ENCODE measurements at regions of chr10 and their contacts with region 1.

Region 1: GRCh38 chr10:126013489-126014281 is 117.3 kb downstream of the FANK1 start:
- DNase-seq: no peak
- CTCF ChIP-seq: peak; percentile 26

Region 2: GRCh38 chr10:125953778-125954385 is 59.8 kb before region 1 on chr10:
- CTCF ChIA-PET with region 1: no interaction called
- POLR2A ChIA-PET with region 1: no interaction called
- DNase-seq: no peak
- CTCF ChIP-seq: no peak

Region 3: GRCh38 chr10:126027692-126028091 is 14.0 kb after region 1 on chr10:
- CTCF ChIA-PET with region 1: interaction called, 20 read pairs
- POLR2A ChIA-PET with region 1: no interaction called
- DNase-seq: no peak
- CTCF ChIP-seq: no peak

Measured in GM10248 (cell line).